GM12878 (cell line): ENCODE measurements at regions of chr11 and their contacts with region 1.

Region 1: DNA sequence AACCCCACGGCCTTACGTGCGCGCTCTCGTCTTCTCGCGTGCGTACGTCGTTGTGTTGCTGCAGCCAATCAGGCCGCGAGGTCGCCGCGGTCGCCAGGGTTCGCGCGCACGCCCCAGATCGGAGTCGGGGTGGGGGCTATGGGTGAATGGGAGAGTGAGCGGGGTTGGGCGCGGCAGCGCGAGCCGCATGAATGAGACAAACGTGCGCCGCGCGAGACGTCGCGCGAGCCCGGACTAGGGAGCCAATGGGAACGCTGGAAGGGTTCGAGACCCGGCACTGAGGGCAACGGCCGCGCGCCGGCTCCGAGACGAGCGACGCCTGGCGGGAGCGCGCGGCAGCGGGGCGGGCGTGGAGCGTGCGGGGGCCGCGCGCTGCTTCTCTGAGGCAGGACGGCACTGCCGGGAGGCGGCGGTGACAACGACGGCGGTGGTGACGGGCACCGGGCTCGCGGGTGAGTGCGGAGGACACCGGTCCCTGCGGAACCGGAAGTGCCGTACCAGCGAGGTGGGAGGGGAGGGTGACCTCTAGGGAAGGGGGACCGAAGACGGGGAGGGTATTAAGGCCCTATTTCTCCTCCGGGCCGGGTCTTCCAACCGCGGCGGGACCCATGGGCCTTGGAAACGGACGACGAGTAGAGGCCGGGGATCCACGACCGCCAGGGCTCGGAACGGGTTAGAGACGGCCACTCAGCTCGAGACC is at the start of gene ZDHHC5:
- DNase-seq: peak; percentile 99
- ATAC-seq: peak; percentile 91
- H3K4me3 ChIP-seq: peak within 1 kb of the TSS; percentile 90
- H3K27ac ChIP-seq: peak within 1 kb of the TSS; percentile 99
- H3K4me1 ChIP-seq: peaks cover 7% of the 10 kb centered on the region
- H3K27me3 ChIP-seq: no peaks in the 10 kb centered on the region
- CTCF ChIP-seq: peak; percentile 25 to 37 (median 34); a peak in 4 of 6 replicates
- EP300 ChIP-seq: no peak
- POLR2A ChIP-seq: peak; percentile 98
- RAD21 ChIP-seq: no peak
- polyA plus RNA-seq, gene ZDHHC5: 3.9 to 7.3 TPM

Region 2: DNA sequence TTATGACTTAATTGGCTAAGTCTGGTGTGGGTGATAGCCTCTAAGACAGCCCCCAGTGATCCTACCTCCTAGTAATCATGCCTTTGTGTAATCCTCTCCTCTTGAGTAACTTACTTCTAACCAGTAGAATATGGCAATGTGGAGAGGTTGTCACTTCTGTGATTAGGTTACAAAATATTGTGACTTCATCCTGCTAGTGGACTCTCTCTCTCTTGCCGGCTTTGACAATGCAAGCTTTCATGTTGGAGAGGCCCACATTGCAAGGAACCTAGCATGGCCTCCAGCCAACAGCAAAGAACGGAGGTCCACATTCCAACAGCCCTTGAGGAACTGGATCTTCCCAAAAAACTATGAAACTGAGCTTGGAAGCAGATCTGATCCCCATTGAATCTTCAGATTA is 37.7 kb before region 1 on chr11:
- CTCF ChIA-PET with region 1: no interaction called
- POLR2A ChIA-PET with region 1: no interaction called
- RAD21 ChIA-PET with region 1: no interaction called
- SMC1A ChIA-PET with region 1: no interaction called
- in situ Hi-C with region 1: no loop called
- intact Hi-C with region 1: no loop called
- DNase-seq: no peak
- ATAC-seq: no peak
- H3K4me3 ChIP-seq: no peak overlapping the region
- H3K27ac ChIP-seq: no peak overlapping the region
- H3K4me1 ChIP-seq: no peaks in the 10 kb centered on the region
- H3K27me3 ChIP-seq: no peaks in the 10 kb centered on the region; a peak in 1 of 4 replicates
- CTCF ChIP-seq: no peak
- EP300 ChIP-seq: no peak
- POLR2A ChIP-seq: no peak
- RAD21 ChIP-seq: no peak

Region 3: GRCh38 chr11:57712256-57713150 is 44.6 kb after region 1 on chr11 and contains the start of gene TMX2:
- CTCF ChIA-PET with region 1: interaction called, 7 read pairs
- POLR2A ChIA-PET with region 1: no interaction called
- RAD21 ChIA-PET with region 1: interaction called, 4 read pairs
- SMC1A ChIA-PET with region 1: interaction called, 4 read pairs
- in situ Hi-C with region 1: no loop called
- intact Hi-C with region 1: loop called (anchors 1 kb)
- DNase-seq: peak; percentile 99
- ATAC-seq: peak; percentile 95
- H3K4me3 ChIP-seq: peak within 1 kb of the TSS; percentile 97
- H3K27ac ChIP-seq: peak within 1 kb of the TSS; percentile 86
- H3K4me1 ChIP-seq: peaks cover 4% of the 10 kb centered on the region
- H3K27me3 ChIP-seq: no peaks in the 10 kb centered on the region
- CTCF ChIP-seq: no peak
- EP300 ChIP-seq: no peak
- POLR2A ChIP-seq: peak; percentile 96
- RAD21 ChIP-seq: no peak
- polyA plus RNA-seq, gene TMX2: 107 to 128 TPM

Region 4: DNA sequence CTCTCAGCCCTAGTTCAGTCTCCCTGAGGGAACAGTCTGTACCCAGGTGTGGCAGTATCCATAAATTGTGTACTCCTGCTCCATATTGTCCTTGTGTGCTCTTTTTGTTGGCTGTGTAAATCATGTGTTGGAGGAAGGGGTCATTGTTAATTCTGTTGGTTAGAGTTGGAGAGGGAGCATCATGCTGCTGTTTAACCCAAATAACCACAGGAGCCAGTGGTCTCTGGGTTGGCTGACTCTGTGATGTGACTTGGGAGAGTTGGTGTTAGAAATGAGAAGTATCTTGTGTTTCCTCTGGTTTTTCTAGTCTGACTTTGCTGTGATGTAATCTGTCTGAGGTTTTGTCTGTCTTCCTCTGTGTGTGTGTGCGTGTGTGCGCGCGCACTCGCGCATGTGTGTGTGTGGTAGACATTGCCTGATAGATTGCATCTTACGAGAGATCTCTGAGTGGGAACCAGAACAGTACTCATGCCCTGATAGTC is 124.2 kb after region 1 on chr11:
- CTCF ChIA-PET with region 1: interaction called, 3 read pairs
- POLR2A ChIA-PET with region 1: no interaction called
- RAD21 ChIA-PET with region 1: no interaction called
- SMC1A ChIA-PET with region 1: no interaction called
- in situ Hi-C with region 1: no loop called
- intact Hi-C with region 1: loop called (anchors 2 kb)
- DNase-seq: peak; percentile 93
- ATAC-seq: peak; percentile 92
- H3K4me3 ChIP-seq: peak overlapping the region; percentile 34; the same call in 1 of the 2 replicates
- H3K27ac ChIP-seq: peak overlapping the region; percentile 52
- H3K4me1 ChIP-seq: peaks cover 42% of the 10 kb centered on the region
- H3K27me3 ChIP-seq: no peaks in the 10 kb centered on the region
- CTCF ChIP-seq: no peak
- EP300 ChIP-seq: peak; percentile 49 to 81; a peak in 3 of 4 replicates
- POLR2A ChIP-seq: peak; percentile 62; the same call in 1 of the 2 replicates
- RAD21 ChIP-seq: no peak

Region 5: DNA sequence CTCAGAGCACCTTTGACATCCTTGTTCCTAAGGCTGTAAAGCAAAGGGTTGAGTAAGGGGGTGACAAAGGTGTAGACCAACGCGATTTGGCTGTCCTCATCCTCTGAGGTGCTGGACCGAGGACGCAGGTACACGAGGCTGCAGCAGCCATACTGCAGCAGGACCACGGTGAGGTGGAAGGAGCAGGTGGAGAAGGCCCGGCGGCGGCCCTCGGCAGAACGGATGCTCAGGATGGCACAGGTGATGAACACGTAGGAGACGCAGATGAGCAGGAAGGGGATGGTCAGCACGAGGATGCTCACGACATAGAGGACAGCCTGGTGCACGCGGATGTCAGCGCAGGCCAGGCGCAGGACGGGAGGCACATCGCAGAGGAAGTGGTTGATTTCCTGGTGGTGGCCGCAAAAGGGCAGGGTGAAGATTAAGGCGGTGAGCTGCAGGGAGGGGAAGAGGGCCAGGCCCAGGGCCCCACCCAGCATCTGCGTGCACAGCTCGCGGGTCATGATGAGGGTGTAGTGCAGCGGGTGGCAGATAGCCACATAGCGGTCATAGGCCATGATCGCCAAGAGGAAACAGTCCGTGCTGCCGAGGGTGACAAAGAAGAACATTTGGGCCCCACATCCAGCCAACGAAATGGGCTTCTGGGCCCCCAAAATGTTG is 560.2 kb after region 1 on chr11:
- CTCF ChIA-PET with region 1: no interaction called
- POLR2A ChIA-PET with region 1: no interaction called
- RAD21 ChIA-PET with region 1: no interaction called
- SMC1A ChIA-PET with region 1: no interaction called
- in situ Hi-C with region 1: no loop called
- intact Hi-C with region 1: no loop called
- DNase-seq: no peak
- ATAC-seq: no peak
- H3K4me3 ChIP-seq: no peak overlapping the region
- H3K27ac ChIP-seq: no peak overlapping the region
- H3K4me1 ChIP-seq: no peaks in the 10 kb centered on the region
- H3K27me3 ChIP-seq: no peaks in the 10 kb centered on the region
- CTCF ChIP-seq: no peak
- EP300 ChIP-seq: no peak
- POLR2A ChIP-seq: no peak
- RAD21 ChIP-seq: no peak

Region 6: GRCh38 chr11:58513747-58514367 is 846.0 kb after region 1 on chr11:
- CTCF ChIA-PET with region 1: interaction called, 11 read pairs
- POLR2A ChIA-PET with region 1: no interaction called
- RAD21 ChIA-PET with region 1: interaction called, 3 read pairs
- SMC1A ChIA-PET with region 1: interaction called, 5 read pairs
- in situ Hi-C with region 1: no loop called
- intact Hi-C with region 1: no loop called
- DNase-seq: no peak
- ATAC-seq: peak; percentile 84
- H3K4me3 ChIP-seq: no peak overlapping the region
- H3K27ac ChIP-seq: no peak overlapping the region
- H3K4me1 ChIP-seq: no peaks in the 10 kb centered on the region
- H3K27me3 ChIP-seq: no peaks in the 10 kb centered on the region
- CTCF ChIP-seq: peak; percentile 46 to 68 (median 62); a peak in 5 of 6 replicates
- EP300 ChIP-seq: no peak
- POLR2A ChIP-seq: no peak
- RAD21 ChIP-seq: peak; percentile 89

Region 7: DNA sequence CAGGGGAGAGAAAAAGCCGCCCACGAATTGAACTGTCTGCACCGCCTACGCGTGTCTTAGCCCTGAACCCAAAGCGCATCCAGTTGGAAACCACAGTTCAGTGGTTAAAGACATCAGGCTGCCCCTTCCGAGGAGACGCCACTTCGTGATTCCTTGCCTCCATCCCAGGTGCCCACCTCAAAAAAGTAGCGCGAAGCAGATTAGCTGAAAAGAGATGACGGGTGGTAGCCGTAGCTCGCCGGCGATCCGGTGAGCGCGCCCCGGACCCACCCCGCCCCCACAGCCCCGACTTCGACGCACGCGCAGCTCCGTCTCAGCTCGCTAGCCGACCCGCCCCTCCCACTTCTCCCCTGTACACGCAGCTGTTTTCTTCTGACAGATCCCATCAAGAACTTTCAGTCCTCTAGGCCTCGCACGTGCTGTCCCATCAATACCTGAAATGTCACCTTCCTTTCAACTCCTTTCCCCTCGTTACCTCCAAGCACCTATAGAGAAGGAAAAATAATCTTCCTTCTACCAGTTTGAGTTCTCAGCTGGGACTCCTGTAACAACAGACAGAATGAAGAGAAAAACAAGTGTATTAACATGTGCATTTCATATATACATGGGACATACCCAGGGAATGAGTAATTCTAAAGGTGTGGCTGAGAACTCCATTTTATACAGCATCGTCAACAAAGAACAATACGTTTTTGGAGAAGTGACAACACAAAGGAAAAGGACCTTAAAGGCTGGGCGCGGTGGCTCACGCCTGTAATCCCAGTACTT is 1893.0 kb after region 1 on chr11:
- CTCF ChIA-PET with region 1: no interaction called
- POLR2A ChIA-PET with region 1: no interaction called
- RAD21 ChIA-PET with region 1: no interaction called
- SMC1A ChIA-PET with region 1: no interaction called
- in situ Hi-C with region 1: no loop called
- intact Hi-C with region 1: loop called (anchors 5 kb)
- DNase-seq: peak; percentile 51
- ATAC-seq: peak; percentile 56
- H3K4me3 ChIP-seq: peak overlapping the region; percentile 59
- H3K27ac ChIP-seq: peak overlapping the region; percentile 73
- H3K4me1 ChIP-seq: peaks cover 4% of the 10 kb centered on the region; the same call in 1 of the 2 replicates
- H3K27me3 ChIP-seq: no peaks in the 10 kb centered on the region
- CTCF ChIP-seq: no peak
- EP300 ChIP-seq: no peak
- POLR2A ChIP-seq: peak; percentile 56
- RAD21 ChIP-seq: no peak